Sciatic nerve (tissue), 2 donors: ENCODE measurements at regions of chr2 and their contacts with region 1.

Region 1: DNA sequence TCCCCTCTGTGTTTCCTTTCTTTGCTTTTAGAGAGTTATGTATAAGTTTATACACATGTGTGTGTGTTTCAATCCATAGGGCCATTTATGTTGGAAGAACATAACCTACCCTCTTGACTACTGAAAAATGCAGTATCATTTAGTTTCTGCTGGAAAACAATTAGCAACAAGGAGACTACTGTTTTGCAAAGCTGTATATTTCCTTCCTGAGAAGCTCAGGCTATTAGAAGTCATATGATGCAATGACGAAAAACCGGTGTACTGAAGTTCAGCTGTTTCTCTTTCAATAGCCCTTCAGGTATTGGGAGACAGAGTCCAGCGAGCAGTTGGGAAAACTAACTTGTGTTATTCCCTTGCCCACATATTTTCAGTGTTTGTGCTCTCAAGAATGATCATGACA is 447.7 kb upstream of the GYPC start:
- DNase-seq: no peak
- ATAC-seq: no peak

Region 2: DNA sequence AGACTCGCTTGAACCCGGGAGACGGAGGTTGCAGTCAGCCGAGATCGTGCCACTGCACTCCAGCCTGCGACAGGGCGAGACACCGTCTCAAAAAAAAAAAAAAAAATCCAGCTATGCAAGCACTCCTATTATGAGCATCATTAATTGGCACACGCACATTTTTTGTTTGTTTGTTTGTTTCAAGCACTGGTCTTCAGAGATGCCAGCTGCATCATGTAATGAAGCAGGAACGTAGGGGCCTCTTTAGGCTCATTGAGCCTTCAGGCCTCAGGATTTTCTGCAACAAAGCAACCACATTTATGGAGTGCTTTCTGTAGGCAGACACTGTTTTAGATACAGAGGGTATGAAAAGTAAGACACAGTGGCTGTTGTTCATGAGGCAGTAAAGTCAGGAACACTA is 1597.4 kb before region 1 on chr2:
- intact Hi-C with region 1: loop called (anchors 10 kb)
- DNase-seq: no peak
- ATAC-seq: no peak

Region 3: DNA sequence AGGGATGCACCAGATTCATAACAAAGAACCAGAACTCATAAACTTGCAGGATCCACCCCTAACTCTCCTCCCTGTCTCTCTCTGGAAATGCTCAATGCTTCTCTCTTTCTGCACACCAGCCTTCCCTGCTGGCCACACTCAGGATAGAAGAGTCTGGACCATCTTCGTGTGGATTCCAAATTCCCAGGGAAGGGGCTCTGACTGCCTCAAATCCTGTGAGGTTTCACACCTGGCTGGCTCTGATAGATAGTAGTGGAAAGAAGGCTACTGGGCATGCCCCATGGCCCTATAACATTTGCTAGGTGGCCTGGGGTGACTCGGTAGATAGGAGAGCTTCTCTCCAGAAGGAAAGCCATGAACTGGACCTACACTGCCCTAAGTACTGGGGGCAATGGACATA is 35.5 kb before region 1 on chr2:
- intact Hi-C with region 1: no loop called
- DNase-seq: no peak
- ATAC-seq: no peak